ENCODE measurements at regions of chr20 and their contacts with region 1.

Region 1: DNA sequence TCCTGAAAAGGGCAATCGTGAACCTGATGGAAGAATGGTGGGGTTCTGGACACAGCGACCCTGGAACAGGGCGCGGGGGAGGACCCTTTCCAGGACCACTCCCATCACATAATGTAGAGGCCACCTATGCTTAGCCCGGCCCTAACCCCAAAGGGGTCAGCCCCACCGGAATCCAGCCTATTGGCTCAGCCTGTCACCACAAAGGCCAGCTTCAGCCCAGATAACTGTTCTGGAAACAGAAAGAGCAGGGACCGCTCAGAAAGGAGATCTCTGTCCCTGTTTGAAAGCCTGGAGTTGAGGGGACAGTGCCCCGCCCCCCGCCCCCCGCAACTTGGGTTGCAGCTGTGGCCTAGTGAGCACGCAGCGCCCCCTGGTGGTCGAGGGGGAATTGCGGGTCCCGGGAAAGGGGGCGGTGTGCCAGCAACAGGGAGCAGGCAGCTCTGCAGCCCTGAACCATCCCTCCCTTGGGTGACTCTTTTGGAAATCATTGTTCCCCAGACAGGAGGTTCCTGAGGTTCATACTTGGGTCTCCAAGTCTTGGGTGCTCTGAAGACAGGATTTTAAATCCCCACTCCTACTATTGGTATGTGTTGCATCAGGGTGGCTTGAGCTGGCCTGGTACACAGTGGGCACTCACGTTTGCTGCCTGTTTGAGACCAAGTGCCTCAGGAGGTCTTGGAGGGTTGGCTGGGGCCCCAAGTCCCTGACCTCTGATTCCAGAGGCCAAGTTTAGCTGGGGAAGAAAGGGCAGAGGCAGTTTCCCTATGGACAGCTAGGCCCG is 1.5 kb downstream of the SIGLEC1 start:
- DNase-seq: peak; percentile 92
- ATAC-seq: peak; percentile 81
- H3K4me3 Mint-ChIP-seq: no peak overlapping the region
- H3K27ac Mint-ChIP-seq: no peak overlapping the region
- H3K4me1 Mint-ChIP-seq: no peaks in the 10 kb centered on the region
- H3K27me3 Mint-ChIP-seq: no peaks in the 10 kb centered on the region
- CTCF ChIP-seq: peak; percentile 99

Region 2: GRCh38 chr20:3430376-3431069 is 280.4 kb before region 1 on chr20:
- CTCF ChIA-PET with region 1: no interaction called
- POLR2A ChIA-PET with region 1: no interaction called
- DNase-seq: no peak
- ATAC-seq: no peak
- H3K4me3 Mint-ChIP-seq: no peak overlapping the region
- H3K27ac Mint-ChIP-seq: no peak overlapping the region
- H3K4me1 Mint-ChIP-seq: peaks cover 3% of the 10 kb centered on the region
- H3K27me3 Mint-ChIP-seq: no peaks in the 10 kb centered on the region
- CTCF ChIP-seq: no peak

Region 3: GRCh38 chr20:3553660-3554059 is 157.2 kb before region 1 on chr20:
- CTCF ChIA-PET with region 1: no interaction called
- POLR2A ChIA-PET with region 1: no interaction called
- DNase-seq: no peak
- ATAC-seq: no peak
- H3K4me3 Mint-ChIP-seq: no peak overlapping the region
- H3K27ac Mint-ChIP-seq: no peak overlapping the region
- H3K4me1 Mint-ChIP-seq: no peaks in the 10 kb centered on the region
- H3K27me3 Mint-ChIP-seq: no peaks in the 10 kb centered on the region
- CTCF ChIP-seq: no peak

Region 4: GRCh38 chr20:3670511-3670910 is 40.4 kb before region 1 on chr20:
- CTCF ChIA-PET with region 1: interaction called, 56 read pairs
- POLR2A ChIA-PET with region 1: no interaction called
- DNase-seq: peak; percentile 38
- ATAC-seq: peak; percentile 29
- H3K4me3 Mint-ChIP-seq: no peak overlapping the region
- H3K27ac Mint-ChIP-seq: no peak overlapping the region
- H3K4me1 Mint-ChIP-seq: peaks cover 30% of the 10 kb centered on the region
- H3K27me3 Mint-ChIP-seq: peaks cover 38% of the 10 kb centered on the region
- CTCF ChIP-seq: no peak

Region 5: GRCh38 chr20:3686867-3687321 is 24.0 kb before region 1 on chr20:
- CTCF ChIA-PET with region 1: interaction called, 38 read pairs
- POLR2A ChIA-PET with region 1: no interaction called
- DNase-seq: no peak
- ATAC-seq: peak; percentile 17
- H3K4me3 Mint-ChIP-seq: no peak overlapping the region
- H3K27ac Mint-ChIP-seq: no peak overlapping the region
- H3K4me1 Mint-ChIP-seq: peaks cover 30% of the 10 kb centered on the region
- H3K27me3 Mint-ChIP-seq: peaks cover 15% of the 10 kb centered on the region
- CTCF ChIP-seq: no peak

Region 6: DNA sequence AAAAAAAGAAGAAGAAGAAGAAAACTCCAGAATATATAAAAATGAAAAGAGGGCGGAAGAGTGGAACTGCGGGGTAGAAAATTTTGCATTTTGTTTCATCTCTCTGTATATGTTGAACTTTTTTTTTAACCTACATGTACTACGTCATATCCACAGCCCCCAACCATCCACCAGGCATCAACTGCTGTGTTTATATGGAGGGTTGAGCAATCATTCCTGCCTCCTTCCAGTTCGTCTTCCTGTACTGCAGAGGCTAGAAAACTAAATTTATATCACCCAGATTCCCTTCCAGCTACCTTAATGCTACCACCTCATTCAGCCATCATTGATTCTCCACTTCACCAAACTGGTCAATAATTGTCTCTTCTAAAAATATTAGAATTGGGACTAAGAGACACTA is 11.0 kb after region 1 on chr20:
- CTCF ChIA-PET with region 1: interaction called, 15 read pairs
- POLR2A ChIA-PET with region 1: no interaction called
- DNase-seq: no peak
- ATAC-seq: no peak
- H3K4me3 Mint-ChIP-seq: no peak overlapping the region
- H3K27ac Mint-ChIP-seq: no peak overlapping the region
- H3K4me1 Mint-ChIP-seq: peaks cover 8% of the 10 kb centered on the region
- H3K27me3 Mint-ChIP-seq: peaks cover 2% of the 10 kb centered on the region
- CTCF ChIP-seq: no peak

Region 7: GRCh38 chr20:3732327-3733118 is 21.6 kb after region 1 on chr20 and contains the start of gene HSPA12B:
- CTCF ChIA-PET with region 1: interaction called, 13 read pairs
- POLR2A ChIA-PET with region 1: no interaction called
- DNase-seq: peak; percentile 51
- ATAC-seq: peak; percentile 69
- H3K4me3 Mint-ChIP-seq: peak within 1 kb of the TSS; percentile 64
- H3K27ac Mint-ChIP-seq: no peak within 1 kb of the TSS
- H3K4me1 Mint-ChIP-seq: peaks cover 23% of the 10 kb centered on the region
- H3K27me3 Mint-ChIP-seq: peaks cover 43% of the 10 kb centered on the region
- CTCF ChIP-seq: no peak
- total RNA-seq, gene HSPA12B: 6.3 to 8.5 TPM (median 8.2 TPM) in 3 replicates

Region 8: DNA sequence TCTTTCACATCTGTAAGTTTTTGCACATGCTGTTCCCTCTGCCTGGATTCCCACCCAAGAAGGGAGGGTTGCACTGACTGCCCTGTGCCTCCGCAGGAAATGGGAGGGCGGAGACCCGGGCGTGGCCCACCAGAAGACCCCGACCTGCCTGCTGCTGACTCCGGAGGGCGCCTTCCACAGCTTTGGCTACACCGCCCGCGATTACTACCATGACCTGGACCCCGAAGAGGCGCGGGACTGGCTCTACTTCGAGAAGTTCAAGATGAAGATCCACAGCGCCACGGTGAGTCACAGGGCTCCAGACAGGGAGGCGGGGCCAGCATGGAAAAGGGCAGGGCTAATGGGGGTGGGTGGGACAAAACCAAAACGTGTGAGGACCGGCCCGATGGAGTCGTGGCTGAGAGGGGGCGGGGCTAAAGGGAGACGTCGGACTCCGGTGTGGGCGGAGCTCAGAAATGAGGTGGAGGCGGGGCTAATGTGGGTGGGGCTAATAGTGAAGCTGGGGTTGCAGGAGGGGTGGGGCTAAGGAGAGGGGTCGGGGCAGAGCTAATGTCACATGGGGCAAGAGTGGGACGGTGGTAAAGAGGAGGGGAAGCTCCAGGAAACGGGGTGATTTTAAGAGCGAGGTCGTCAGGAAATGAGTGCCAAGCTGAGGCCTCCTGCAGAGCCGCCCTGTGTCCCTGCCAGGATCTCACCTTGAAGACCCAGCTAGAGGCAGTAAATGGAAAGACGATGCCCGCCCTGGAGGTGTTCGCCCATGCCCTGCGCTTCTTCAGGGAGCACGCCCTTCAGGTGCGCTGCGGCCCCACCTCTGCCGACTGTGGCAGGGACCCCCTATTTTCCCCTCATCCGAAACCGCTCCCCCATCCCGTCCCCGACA is 34.2 kb after region 1 on chr20:
- CTCF ChIA-PET with region 1: interaction called, 88 read pairs
- POLR2A ChIA-PET with region 1: no interaction called
- DNase-seq: peak; percentile 100
- ATAC-seq: peak; percentile 85
- H3K4me3 Mint-ChIP-seq: peak overlapping the region; percentile 89
- H3K27ac Mint-ChIP-seq: peak overlapping the region; percentile 88
- H3K4me1 Mint-ChIP-seq: peaks cover 21% of the 10 kb centered on the region
- H3K27me3 Mint-ChIP-seq: peaks cover 44% of the 10 kb centered on the region
- CTCF ChIP-seq: no peak

Measured in WTC11 (cell line).